ENCODE measurements at regions of chr20 and their contacts with region 1.

Region 1: GRCh38 chr20:20568604-20569205 is 143.7 kb downstream of the RALGAPA2 start:
- DNase-seq: peak in 7 of 10 donors; percentile 16 to 90 (median 56)

Region 2: DNA sequence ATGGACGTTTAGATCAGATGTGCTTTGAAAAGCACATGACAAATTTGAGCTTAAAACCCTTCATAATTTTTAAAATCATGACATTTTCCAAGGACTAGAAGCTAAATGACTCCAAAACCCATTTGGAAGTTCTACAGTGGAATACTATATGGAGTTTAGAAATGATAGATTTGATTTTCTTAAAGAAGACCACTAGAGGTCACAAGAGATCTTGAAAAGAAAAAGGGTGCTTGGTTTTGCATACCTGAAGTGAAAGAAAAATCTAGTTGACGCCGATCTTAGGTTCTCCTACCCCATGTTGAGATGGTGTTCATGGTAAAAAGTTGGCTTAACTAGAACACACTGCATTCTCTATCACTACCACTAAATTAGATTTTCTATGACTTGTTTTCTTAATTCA is 484.9 kb before region 1 on chr20:
- intact Hi-C with region 1: loop called (anchors 10 kb)
- DNase-seq: no peak

Region 3: GRCh38 chr20:20360464-20360863 is 208.2 kb before region 1 on chr20:
- intact Hi-C with region 1: loop called (anchors 2 kb)
- DNase-seq: peak in 6 of 10 donors; percentile 32 to 86 (median 52)

Region 4: GRCh38 chr20:20465252-20465651 is 103.5 kb before region 1 on chr20:
- intact Hi-C with region 1: loop called (anchors 1 kb)
- DNase-seq: peak in 1 of 10 donors; percentile 41

Region 5: DNA sequence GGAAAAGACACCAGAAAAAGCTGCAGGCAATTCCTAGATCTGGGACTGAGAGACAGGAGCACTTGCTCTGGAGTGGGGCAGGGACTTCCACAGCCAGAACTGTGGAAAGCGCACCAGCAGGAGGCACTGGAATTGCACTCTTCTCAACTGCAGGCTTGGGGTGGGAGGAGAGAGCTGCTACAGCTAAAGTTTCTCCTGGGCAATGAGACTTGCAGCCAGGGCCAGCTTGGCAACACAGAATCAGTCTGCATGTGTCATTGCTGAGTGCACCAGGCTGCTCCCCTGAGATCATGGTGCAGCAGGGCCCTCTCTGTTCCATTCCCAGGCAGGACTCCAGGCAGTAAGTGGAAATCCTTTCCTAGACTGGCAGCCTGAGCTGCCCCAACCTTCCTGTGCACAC is 55.0 kb before region 1 on chr20:
- intact Hi-C with region 1: loop called (anchors 5 kb)
- DNase-seq: peak in 4 of 10 donors; percentile 25 to 90 (median 52)

Measured in posterior cingulate gyrus (tissue), 11 donors.